ENCODE measurements at regions of chr2 and their contacts with region 1.

Region 1: GRCh38 chr2:216108967-216109921 is at the start of gene XRCC5:
- DNase-seq: peak; percentile 97
- H3K4me3 Mint-ChIP-seq: peak within 1 kb of the TSS; percentile 99
- H3K27ac Mint-ChIP-seq: peak within 1 kb of the TSS; percentile 98
- H3K4me1 Mint-ChIP-seq: peaks cover 55% of the 10 kb centered on the region
- H3K27me3 Mint-ChIP-seq: no peaks in the 10 kb centered on the region
- total RNA-seq, gene XRCC5: 296 to 302 TPM

Region 2: DNA sequence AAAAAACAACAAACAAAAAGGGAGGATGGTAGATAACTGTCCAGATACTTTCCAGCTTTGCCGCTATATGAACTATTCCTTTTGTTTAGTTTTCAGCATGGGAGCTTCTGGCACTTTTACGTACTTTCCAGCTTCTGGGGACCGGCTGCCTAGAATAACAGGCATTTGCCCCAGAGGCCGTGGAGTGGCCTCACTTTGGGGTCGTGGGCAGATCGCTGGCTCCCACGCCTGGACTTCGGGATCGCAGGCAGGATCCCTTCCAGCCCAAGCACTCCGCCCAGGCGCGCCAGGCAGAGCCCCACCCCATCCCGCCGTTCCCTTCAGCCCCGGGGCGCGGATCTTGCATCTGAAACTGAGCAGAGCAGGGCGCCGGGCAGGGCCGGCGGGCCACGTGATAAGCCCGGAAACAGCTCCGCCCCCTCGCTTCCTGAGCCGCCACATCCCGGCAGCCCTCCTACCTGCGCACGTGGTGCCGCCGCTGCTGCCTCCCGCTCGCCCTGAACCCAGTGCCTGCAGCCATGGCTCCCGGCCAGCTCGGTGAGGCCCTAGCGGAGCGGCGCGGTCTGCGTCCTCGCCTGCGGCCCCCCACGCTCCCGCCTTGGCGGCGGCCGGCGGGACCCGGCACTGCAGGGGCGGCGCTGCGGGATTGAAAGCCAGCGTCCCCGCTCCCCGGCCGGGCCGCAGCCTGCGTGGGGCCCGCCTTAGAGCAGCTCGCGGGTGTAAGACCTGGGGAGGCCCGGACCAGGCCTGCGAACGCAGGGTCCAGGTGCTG is 797.4 kb before region 1 on chr2 and contains the start of gene ATIC:
- CTCF ChIA-PET with region 1: no interaction called
- POLR2A ChIA-PET with region 1: interaction called, 10 read pairs
- DNase-seq: peak; percentile 94
- H3K4me3 Mint-ChIP-seq: peak within 1 kb of the TSS; percentile 97
- H3K27ac Mint-ChIP-seq: peak within 1 kb of the TSS; percentile 96
- H3K4me1 Mint-ChIP-seq: peaks cover 39% of the 10 kb centered on the region
- H3K27me3 Mint-ChIP-seq: no peaks in the 10 kb centered on the region
- total RNA-seq, gene ATIC: 129 to 140 TPM

Region 3: DNA sequence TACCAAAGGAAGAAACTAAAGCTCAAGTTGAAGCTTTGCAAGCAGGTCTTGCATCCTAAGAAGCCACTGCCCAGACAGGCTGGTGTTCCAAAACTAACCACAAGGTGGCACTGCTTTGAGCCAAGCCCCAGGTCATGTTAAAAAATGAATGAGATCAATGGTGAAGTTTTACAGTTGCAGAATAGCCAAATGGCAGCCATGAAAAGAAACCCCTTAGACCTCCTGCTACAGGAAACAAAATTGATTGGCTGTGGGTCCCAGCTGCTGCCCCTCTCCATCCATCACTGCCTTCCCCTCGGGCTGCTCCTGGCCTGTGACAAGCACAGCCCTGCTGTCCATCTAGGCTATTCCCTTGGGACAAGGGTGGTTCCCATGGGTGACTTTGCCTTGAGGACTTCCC is 75.2 kb before region 1 on chr2:
- CTCF ChIA-PET with region 1: interaction called, 28 read pairs
- POLR2A ChIA-PET with region 1: interaction called, 8 read pairs
- DNase-seq: peak; percentile 83
- H3K4me3 Mint-ChIP-seq: no peak overlapping the region
- H3K27ac Mint-ChIP-seq: no peak overlapping the region
- H3K4me1 Mint-ChIP-seq: peaks cover 49% of the 10 kb centered on the region
- H3K27me3 Mint-ChIP-seq: no peaks in the 10 kb centered on the region

Region 4: DNA sequence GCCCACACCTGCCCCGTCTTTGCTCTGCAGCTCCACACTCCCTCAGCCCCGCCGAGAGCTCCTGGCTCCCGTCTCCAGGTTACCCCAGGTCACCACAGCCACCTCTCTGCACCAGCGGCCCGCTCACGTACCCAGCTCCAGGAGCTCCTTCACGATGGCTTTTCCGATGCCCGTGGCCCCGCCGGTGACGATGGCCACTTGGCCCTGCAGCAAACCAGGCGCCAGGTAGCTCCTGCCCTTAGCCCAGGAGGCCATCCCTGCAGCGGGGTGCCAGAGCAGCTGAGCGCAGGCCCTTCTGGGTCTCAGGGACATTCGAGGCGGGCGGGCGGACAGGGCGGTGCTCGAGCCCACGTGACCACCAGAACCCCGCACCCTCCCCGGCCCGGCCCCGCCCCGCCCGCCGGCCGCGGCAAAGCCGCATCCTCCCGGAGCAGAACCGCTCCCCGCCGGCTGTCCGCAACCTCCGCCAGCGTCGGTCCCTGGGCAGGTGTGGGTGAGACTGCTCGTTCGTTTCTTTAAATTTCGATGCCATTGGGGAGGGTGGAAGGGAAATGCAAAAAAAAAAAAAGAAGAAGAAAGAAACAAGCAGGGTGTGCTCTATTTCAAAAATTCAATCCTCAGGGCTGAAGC is 27.6 kb before region 1 on chr2 and contains the starts of genes PECR and TMEM169:
- CTCF ChIA-PET with region 1: interaction called, 27 read pairs
- POLR2A ChIA-PET with region 1: interaction called, 103 read pairs
- DNase-seq: peak; percentile 85
- H3K4me3 Mint-ChIP-seq: peak within 1 kb of the TSS; percentile 96
- H3K27ac Mint-ChIP-seq: peak within 1 kb of the TSS; percentile 79
- H3K4me1 Mint-ChIP-seq: peaks cover 60% of the 10 kb centered on the region
- H3K27me3 Mint-ChIP-seq: no peaks in the 10 kb centered on the region
- total RNA-seq, gene PECR: 32.5 to 34.7 TPM
- total RNA-seq, gene TMEM169: 2.3 to 3.5 TPM

Region 5: DNA sequence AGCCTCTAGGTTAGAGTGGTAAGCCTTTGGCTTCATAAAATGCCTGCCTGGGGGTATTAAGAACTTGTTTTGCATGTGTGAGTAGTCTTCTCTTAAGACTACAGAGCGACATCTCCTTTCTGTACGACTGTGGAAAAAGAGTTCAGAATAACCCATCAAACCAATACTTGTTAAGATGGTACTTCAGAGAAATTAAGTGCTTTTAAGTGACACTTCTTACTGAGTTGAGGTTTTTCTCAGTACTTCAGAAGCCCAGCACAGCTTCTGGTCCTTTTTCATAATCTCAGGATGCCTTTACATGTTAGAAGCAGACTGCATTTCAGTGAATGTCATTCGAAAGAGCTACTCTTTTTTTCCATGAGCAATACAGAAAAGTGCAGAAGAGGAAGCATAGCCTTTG is 10.7 kb after region 1 on chr2:
- CTCF ChIA-PET with region 1: interaction called, 30 read pairs
- POLR2A ChIA-PET with region 1: interaction called, 29 read pairs
- DNase-seq: no peak
- H3K4me3 Mint-ChIP-seq: peak overlapping the region; percentile 1
- H3K27ac Mint-ChIP-seq: peak overlapping the region; percentile 82
- H3K4me1 Mint-ChIP-seq: peaks cover 83% of the 10 kb centered on the region
- H3K27me3 Mint-ChIP-seq: no peaks in the 10 kb centered on the region

Region 6: DNA sequence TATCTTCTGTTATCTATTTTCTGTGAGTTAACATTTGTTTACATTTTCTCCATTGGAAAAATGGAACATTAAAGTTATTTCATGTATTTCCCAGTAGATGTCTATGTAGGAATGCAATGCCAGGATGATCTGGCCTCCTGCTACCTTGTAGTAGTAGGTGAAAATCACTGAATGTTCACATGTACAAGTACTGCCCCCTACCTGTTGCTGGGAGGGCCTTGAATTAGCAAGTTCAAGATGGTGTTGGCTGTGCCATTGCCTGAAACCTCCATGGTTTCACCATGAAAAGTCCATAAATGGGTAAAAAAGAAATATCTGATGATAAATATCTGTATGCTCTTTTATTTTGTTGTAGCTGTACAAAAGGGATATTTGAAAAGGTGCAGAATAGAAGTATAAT is 30.6 kb after region 1 on chr2:
- CTCF ChIA-PET with region 1: interaction called, 15 read pairs
- POLR2A ChIA-PET with region 1: interaction called, 3 read pairs
- DNase-seq: peak; percentile 32
- H3K4me3 Mint-ChIP-seq: no peak overlapping the region
- H3K27ac Mint-ChIP-seq: no peak overlapping the region
- H3K4me1 Mint-ChIP-seq: peaks cover 31% of the 10 kb centered on the region
- H3K27me3 Mint-ChIP-seq: no peaks in the 10 kb centered on the region